ENCODE measurements at regions of chr3 and their contacts with region 1.

Region 1: DNA sequence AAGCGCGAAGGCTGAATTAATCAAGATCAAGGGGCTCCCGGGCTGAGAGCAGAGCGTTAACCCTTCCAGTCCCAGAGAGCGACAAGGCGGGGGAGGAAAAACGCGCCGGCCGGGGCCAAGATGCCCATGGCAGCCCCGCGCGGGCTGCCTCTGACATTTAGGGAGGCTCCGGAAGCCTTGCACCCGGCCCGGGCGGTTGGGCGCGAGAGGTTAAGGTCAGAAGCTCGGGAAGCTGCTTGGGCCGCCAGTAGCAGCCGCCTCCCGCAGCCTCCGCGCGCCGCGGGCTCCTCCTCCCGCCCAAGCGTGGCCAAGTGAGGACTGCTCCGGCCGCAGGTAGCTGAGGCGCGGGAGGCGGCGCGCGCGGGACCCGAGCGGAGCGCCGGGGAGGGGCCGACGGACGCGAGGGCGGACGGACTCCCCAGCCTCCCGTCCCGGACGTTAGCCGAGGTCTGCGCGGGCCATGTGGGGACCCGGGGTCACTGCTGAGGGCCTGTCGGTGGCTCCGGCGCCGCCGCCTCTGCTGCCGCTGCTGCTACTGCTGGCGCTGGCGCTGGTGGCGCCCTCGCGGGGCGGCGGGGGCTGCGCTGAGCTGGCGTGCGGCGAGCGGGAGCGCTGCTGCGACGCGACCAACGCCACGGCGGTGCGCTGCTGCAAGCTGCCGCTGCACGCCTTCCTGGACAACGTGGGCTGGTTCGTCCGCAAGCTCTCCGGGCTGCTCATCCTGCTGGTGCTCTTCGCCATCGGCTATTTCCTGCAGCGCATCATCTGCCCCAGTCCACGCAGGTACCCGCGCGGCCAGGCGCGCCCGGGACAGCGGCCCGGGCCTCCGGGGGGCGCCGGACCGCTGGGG is at the start of gene C3orf80:
- DNase-seq: peak; percentile 86
- H3K4me3 ChIP-seq: peak within 1 kb of the TSS; percentile 54 to 63
- H3K27ac ChIP-seq: no peak within 1 kb of the TSS
- H3K4me1 ChIP-seq: peaks cover 0 to 12% of the 10 kb centered on the region in 2 experiments; a peak in 1 of 4 replicates
- H3K27me3 ChIP-seq: peaks cover 23% of the 10 kb centered on the region
- CTCF ChIP-seq: peak; percentile 26; the same call in 1 of the 2 replicates
- EP300 ChIP-seq: no peak
- RAD21 ChIP-seq: no peak
- polyA plus RNA-seq, gene C3orf80: 0.02 TPM in 1 of 2 replicates, not detected in the other

Region 2: DNA sequence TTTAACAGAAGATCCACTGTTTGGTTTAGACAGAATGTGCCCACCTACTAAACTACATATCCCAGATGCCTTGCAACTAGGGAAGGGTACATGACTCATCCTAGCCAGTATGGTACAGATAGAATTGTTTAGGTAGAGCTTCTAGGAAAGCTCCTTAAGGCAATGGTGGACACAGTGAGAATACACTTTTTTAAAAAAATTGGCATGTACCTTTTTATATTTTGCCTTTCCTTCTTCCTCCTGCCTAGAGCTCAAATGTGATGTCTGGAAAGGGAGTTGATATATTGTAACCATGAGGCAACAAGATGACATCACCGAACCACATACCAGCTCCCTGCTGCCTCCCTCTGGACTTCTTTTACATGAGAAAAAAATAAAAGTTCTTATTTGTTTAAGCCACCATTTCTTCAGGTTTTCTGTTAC is 14.6 kb before region 1 on chr3:
- CTCF ChIA-PET with region 1: interaction called, 12 read pairs
- POLR2A ChIA-PET with region 1: no interaction called
- DNase-seq: no peak
- H3K4me3 ChIP-seq: no peak overlapping the region; a peak in 1 of 4 replicates
- H3K27ac ChIP-seq: no peak overlapping the region
- H3K4me1 ChIP-seq: no peaks in the 10 kb centered on the region
- H3K27me3 ChIP-seq: no peaks in the 10 kb centered on the region; the same call in 1 of the 2 replicates
- CTCF ChIP-seq: peak; percentile 45
- EP300 ChIP-seq: no peak
- RAD21 ChIP-seq: no peak

Region 3: GRCh38 chr3:160437083-160437455 is 211.7 kb after region 1 on chr3:
- CTCF ChIA-PET with region 1: no interaction called
- POLR2A ChIA-PET with region 1: no interaction called
- DNase-seq: no peak
- H3K4me3 ChIP-seq: no peak overlapping the region
- H3K27ac ChIP-seq: no peak overlapping the region
- H3K4me1 ChIP-seq: no peaks in the 10 kb centered on the region
- H3K27me3 ChIP-seq: no peaks in the 10 kb centered on the region
- CTCF ChIP-seq: no peak
- EP300 ChIP-seq: no peak
- RAD21 ChIP-seq: no peak